Naive thymus-derived CD4-positive, alpha-beta T cell (primary cell): ENCODE measurements at regions of chr16 and their contacts with region 1.

Region 1: DNA sequence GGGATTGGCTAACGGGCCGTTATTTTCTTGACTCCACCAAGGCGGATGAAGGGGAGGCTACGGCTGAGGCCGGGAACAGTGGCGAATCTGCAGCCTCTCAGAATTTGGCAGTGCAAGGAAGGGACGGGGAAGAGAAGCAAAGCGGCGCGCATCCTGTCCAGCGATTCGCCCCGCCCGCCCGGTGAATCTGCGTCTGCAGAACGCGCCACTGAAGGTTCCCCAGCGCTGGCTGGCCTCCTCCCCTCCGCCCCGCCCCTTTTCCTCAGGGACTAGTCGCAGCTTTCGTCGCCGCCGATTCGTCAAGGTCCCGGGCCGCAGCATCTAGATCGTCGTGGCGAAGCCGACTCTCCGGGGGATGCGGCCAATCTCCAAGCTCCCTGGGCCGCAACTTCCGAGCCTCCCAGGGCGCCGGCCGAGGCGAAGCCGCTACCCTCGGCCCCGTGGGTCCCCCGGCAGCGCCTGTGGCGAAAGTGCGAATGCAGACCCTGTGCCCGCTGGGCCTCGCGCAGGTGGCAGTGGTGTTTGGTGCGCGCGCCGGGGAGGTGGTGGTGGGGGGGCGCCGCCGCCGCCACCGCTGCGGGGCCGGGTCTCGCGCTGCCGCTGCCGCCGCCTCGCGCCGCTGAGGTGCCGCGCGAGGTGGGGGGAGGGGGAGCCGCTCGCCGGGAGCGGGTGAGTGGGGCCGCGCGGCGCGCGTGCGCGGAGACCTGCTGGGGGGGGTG is at the start of gene SETD1A:
- DNase-seq: peak; percentile 94 to 99 (median 97)
- ATAC-seq: peak; percentile 93
- H3K4me3 ChIP-seq: peak within 1 kb of the TSS; percentile 100
- H3K4me3 Mint-ChIP-seq: peak within 1 kb of the TSS; percentile 81 to 97 (median 96)
- H3K27ac ChIP-seq: peak within 1 kb of the TSS; percentile 93
- H3K27ac Mint-ChIP-seq: peak within 1 kb of the TSS; percentile 97 to 100 (median 98)
- H3K4me1 ChIP-seq: peaks cover 16 to 22% of the 10 kb centered on the region in 2 donors
- H3K4me1 Mint-ChIP-seq: peaks cover 23 to 46% (median 29%) of the 10 kb centered on the region in 7 donors
- H3K27me3 ChIP-seq: no peaks in the 10 kb centered on the region
- H3K27me3 Mint-ChIP-seq: peaks cover 0 to 3% (median 0%) of the 10 kb centered on the region in 5 donors
- total RNA-seq, gene SETD1A: 27.0 to 47.2 (median 36.8) TPM

Region 2: DNA sequence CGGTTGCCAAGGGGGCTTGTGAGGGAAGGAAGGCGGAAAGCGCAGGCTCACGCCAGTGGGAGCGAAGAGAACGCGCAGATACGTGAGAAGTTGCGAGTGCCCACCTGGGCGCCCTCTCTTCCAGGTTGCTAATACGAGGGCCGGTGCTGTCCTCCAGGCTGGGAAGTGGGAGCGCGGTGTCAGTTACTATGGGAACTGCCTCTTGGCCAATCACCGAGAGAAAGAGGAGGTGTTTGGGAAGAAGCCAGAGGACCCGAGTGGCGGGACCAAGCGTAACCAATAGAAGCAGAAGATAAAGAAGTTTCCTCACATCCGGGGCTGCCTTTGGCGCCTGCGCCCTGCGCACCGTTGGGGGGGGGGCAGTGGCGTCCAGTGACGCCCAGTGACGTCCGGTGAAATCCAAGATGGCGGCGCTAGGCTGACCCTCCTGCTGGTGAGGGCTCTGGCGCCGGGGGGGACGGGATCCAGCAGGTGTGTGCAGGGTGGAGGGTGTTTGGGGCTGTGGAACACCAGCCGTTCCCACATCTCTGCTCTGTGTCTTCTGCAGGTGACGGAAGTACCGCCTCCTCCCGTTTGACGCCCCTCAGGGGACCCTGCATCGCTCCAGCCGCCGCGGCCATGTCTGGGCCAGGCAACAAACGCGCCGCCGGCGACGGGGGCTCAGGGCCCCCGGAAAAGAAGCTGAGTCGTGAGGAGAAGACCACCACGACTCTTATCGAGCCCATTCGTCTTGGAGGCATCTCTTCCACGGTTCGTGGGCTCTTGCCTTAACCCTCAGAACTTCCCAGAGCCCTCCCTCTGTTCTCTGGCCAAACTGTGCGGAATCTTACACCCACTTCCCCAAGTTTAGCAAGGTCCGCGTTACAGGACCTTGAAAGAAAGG is 195.4 kb before region 1 on chr16 and contains the starts of genes CFAP119 and RNF40:
- CTCF ChIA-PET with region 1: no interaction called
- POLR2A ChIA-PET with region 1: no interaction called
- intact Hi-C with region 1: loop called in 1 of 2 experiments (anchors 1 kb)
- DNase-seq: peak; percentile 73 to 97 (median 88)
- ATAC-seq: peak; percentile 96
- H3K4me3 ChIP-seq: peak within 1 kb of the TSS; percentile 99
- H3K4me3 Mint-ChIP-seq: peak within 1 kb of the TSS; percentile 96 to 98 (median 97)
- H3K27ac ChIP-seq: peak within 1 kb of the TSS; percentile 88
- H3K27ac Mint-ChIP-seq: peak within 1 kb of the TSS; percentile 82 to 96 (median 93)
- H3K4me1 ChIP-seq: peaks cover 17 to 31% of the 10 kb centered on the region in 2 donors
- H3K4me1 Mint-ChIP-seq: peaks cover 21 to 41% (median 32%) of the 10 kb centered on the region in 7 donors
- H3K27me3 ChIP-seq: no peaks in the 10 kb centered on the region
- H3K27me3 Mint-ChIP-seq: no peaks in the 10 kb centered on the region
- total RNA-seq, gene CFAP119: 2.3 to 5.9 (median 2.9) TPM
- total RNA-seq, gene RNF40: 68.7 to 122 (median 114) TPM

Region 3: GRCh38 chr16:30786936-30787612 is 170.5 kb before region 1 on chr16 and contains the start of gene ZNF629:
- CTCF ChIA-PET with region 1: no interaction called
- POLR2A ChIA-PET with region 1: no interaction called
- intact Hi-C with region 1: no loop called
- DNase-seq: peak in 5 of 9 donors; percentile 32 to 42 (median 33)
- ATAC-seq: peak; percentile 70
- H3K4me3 ChIP-seq: peak within 1 kb of the TSS; percentile 60
- H3K4me3 Mint-ChIP-seq: peak within 1 kb of the TSS; percentile 74 to 94 (median 88)
- H3K27ac ChIP-seq: peak within 1 kb of the TSS; percentile 68
- H3K27ac Mint-ChIP-seq: peak within 1 kb of the TSS in 8 of 9 donors; percentile 8 to 85 (median 50)
- H3K4me1 ChIP-seq: peaks cover 7% of the 10 kb centered on the region in 2 donors
- H3K4me1 Mint-ChIP-seq: peaks cover 0 to 25% (median 22%) of the 10 kb centered on the region in 7 donors
- H3K27me3 ChIP-seq: peaks cover 0 to 7% of the 10 kb centered on the region in 2 donors
- H3K27me3 Mint-ChIP-seq: peaks cover 0 to 43% (median 0%) of the 10 kb centered on the region in 5 donors
- total RNA-seq, gene ZNF629: 2.4 to 11.1 (median 4.2) TPM

Region 4: DNA sequence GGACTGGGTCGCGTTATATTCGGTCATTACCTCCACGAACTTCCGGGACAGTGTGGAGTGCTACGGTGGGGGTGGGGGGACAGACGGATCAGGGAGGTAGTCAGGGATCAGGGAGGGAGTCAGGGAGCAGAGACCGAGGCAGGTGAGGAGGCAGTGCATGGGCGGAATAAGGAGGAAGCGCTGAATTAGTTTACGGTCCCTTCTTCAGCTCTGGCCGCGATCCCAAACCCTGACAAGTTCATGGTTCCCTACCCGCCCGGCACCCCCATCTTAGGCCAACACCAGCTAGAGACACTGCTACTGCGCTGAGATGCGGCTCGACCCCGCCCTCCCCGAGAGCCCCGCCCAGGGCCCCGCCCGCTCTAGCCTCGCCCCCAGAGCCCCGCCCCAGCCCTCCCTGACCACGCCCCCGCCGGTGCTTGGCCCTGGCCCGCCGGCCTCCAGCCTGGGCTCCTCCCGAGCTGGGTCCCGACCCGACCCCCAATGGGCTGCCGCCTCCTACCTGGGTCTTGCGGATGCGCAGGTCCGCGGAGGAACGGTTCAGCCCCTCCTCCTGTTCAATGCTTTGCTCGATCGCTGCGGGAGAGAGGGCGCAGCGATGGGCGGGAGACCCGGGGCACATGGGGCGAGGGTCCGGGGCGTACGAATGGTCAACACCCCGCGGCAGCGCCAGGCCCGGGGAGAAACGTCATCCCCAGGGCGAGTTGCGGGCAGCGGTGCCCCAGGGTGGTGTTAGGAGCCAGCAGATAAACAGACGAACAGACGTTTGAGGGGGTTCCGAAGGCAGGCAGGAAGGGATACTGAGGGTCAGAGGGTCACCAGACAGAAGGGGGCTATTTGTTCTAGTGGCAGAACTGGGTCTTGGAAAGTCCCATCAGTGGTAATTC is 39.6 kb after region 1 on chr16:
- CTCF ChIA-PET with region 1: no interaction called
- POLR2A ChIA-PET with region 1: no interaction called
- intact Hi-C with region 1: loop called (anchors 1 to 5 kb)
- DNase-seq: peak; percentile 45 to 80 (median 66)
- ATAC-seq: peak; percentile 99
- H3K4me3 ChIP-seq: peak overlapping the region; percentile 78
- H3K4me3 Mint-ChIP-seq: peak overlapping the region; percentile 66 to 90 (median 82)
- H3K27ac ChIP-seq: peak overlapping the region; percentile 61
- H3K27ac Mint-ChIP-seq: peak overlapping the region in 7 of 9 donors; percentile 58 to 87 (median 74)
- H3K4me1 ChIP-seq: peaks cover 5 to 11% of the 10 kb centered on the region in 2 donors
- H3K4me1 Mint-ChIP-seq: peaks cover 0 to 9% (median 6%) of the 10 kb centered on the region in 7 donors
- H3K27me3 ChIP-seq: no peaks in the 10 kb centered on the region
- H3K27me3 Mint-ChIP-seq: peaks cover 0 to 3% (median 0%) of the 10 kb centered on the region in 5 donors

Region 5: GRCh38 chr16:31117391-31118197 is 160.0 kb after region 1 on chr16 and contains the start of gene KAT8:
- CTCF ChIA-PET with region 1: no interaction called
- POLR2A ChIA-PET with region 1: interaction called, 5 read pairs
- intact Hi-C with region 1: loop called (anchors 1 kb)
- DNase-seq: peak; percentile 88 to 99 (median 97)
- ATAC-seq: peak; percentile 95
- H3K4me3 ChIP-seq: peak within 1 kb of the TSS; percentile 65
- H3K4me3 Mint-ChIP-seq: peak within 1 kb of the TSS; percentile 86 to 95 (median 90)
- H3K27ac ChIP-seq: peak within 1 kb of the TSS; percentile 98
- H3K27ac Mint-ChIP-seq: peak within 1 kb of the TSS; percentile 77 to 96 (median 89)
- H3K4me1 ChIP-seq: peaks cover 7 to 15% of the 10 kb centered on the region in 2 donors
- H3K4me1 Mint-ChIP-seq: peaks cover 12 to 32% (median 24%) of the 10 kb centered on the region in 7 donors
- H3K27me3 ChIP-seq: no peaks in the 10 kb centered on the region
- H3K27me3 Mint-ChIP-seq: no peaks in the 10 kb centered on the region
- total RNA-seq, gene KAT8: 63.0 to 134 (median 112) TPM

Region 6: GRCh38 chr16:31873556-31874365 is 916.1 kb after region 1 on chr16 and contains the start of gene ZNF267:
- CTCF ChIA-PET with region 1: interaction called, 3 read pairs
- POLR2A ChIA-PET with region 1: no interaction called
- intact Hi-C with region 1: loop called (anchors 2 to 10 kb)
- DNase-seq: peak; percentile 79 to 96 (median 93)
- ATAC-seq: peak; percentile 79
- H3K4me3 ChIP-seq: peak within 1 kb of the TSS; percentile 90
- H3K4me3 Mint-ChIP-seq: peak within 1 kb of the TSS; percentile 89 to 99 (median 94)
- H3K27ac ChIP-seq: peak within 1 kb of the TSS; percentile 94
- H3K27ac Mint-ChIP-seq: peak within 1 kb of the TSS; percentile 85 to 98 (median 96)
- H3K4me1 ChIP-seq: peaks cover 66 to 72% of the 10 kb centered on the region in 2 donors
- H3K4me1 Mint-ChIP-seq: peaks cover 54 to 95% (median 84%) of the 10 kb centered on the region in 7 donors
- H3K27me3 ChIP-seq: no peaks in the 10 kb centered on the region
- H3K27me3 Mint-ChIP-seq: no peaks in the 10 kb centered on the region
- total RNA-seq, gene ZNF267: 34.8 to 74.9 (median 48.8) TPM